T-cell (primary cell): ENCODE measurements at regions of chr2 and their contacts with region 1.

Region 1: GRCh38 chr2:147660680-147661079 is 184.1 kb upstream of the ACVR2A start:
- DNase-seq: no peak
- ATAC-seq: no peak
- H3K4me3 ChIP-seq: no peak overlapping the region
- H3K4me3 Mint-ChIP-seq: no peak overlapping the region
- H3K27ac ChIP-seq: no peak overlapping the region
- H3K27ac Mint-ChIP-seq: peak overlapping the region in 1 of 2 donors; percentile 36
- H3K4me1 ChIP-seq: peaks cover 13 to 16% of the 10 kb centered on the region in 2 experiments
- H3K4me1 Mint-ChIP-seq: peaks cover 39 to 44% (median 42%) of the 10 kb centered on the region in 3 donors
- H3K27me3 ChIP-seq: no peaks in the 10 kb centered on the region
- H3K27me3 Mint-ChIP-seq: no peaks in the 10 kb centered on the region

Region 2: GRCh38 chr2:147442816-147443215 is 217.9 kb before region 1 on chr2:
- CTCF ChIA-PET with region 1: no interaction called
- POLR2A ChIA-PET with region 1: no interaction called
- DNase-seq: no peak
- ATAC-seq: no peak
- H3K4me3 ChIP-seq: no peak overlapping the region
- H3K4me3 Mint-ChIP-seq: no peak overlapping the region
- H3K27ac ChIP-seq: no peak overlapping the region
- H3K27ac Mint-ChIP-seq: no peak overlapping the region
- H3K4me1 ChIP-seq: no peaks in the 10 kb centered on the region
- H3K4me1 Mint-ChIP-seq: no peaks in the 10 kb centered on the region
- H3K27me3 ChIP-seq: no peaks in the 10 kb centered on the region
- H3K27me3 Mint-ChIP-seq: no peaks in the 10 kb centered on the region

Region 3: DNA sequence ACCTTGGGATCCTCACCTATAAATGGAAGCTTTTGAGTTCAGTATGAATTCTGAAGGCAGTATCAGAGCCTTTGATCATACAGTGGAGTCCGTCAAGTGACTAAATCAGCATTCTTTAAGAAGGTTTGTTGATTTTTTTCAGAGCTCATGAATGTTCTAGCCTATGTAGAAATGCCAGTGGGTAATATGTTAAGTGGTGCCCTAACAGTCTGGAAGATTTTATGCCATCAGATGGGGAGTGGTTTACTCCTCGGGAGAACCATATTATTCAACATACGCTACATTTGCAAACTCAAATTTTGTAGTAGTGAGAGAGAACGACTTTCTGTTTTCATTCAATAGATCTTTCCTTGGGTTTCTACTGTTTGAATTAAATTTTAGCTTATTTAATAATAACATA is 40.9 kb before region 1 on chr2:
- CTCF ChIA-PET with region 1: no interaction called
- POLR2A ChIA-PET with region 1: interaction called in 1 of 2 experiments, 10 read pairs
- DNase-seq: no peak
- ATAC-seq: no peak
- H3K4me3 ChIP-seq: no peak overlapping the region
- H3K4me3 Mint-ChIP-seq: no peak overlapping the region
- H3K27ac ChIP-seq: no peak overlapping the region
- H3K27ac Mint-ChIP-seq: no peak overlapping the region
- H3K4me1 ChIP-seq: peaks cover 6 to 14% of the 10 kb centered on the region in 2 experiments
- H3K4me1 Mint-ChIP-seq: peaks cover 25 to 26% (median 26%) of the 10 kb centered on the region in 3 donors
- H3K27me3 ChIP-seq: no peaks in the 10 kb centered on the region
- H3K27me3 Mint-ChIP-seq: no peaks in the 10 kb centered on the region

Region 4: DNA sequence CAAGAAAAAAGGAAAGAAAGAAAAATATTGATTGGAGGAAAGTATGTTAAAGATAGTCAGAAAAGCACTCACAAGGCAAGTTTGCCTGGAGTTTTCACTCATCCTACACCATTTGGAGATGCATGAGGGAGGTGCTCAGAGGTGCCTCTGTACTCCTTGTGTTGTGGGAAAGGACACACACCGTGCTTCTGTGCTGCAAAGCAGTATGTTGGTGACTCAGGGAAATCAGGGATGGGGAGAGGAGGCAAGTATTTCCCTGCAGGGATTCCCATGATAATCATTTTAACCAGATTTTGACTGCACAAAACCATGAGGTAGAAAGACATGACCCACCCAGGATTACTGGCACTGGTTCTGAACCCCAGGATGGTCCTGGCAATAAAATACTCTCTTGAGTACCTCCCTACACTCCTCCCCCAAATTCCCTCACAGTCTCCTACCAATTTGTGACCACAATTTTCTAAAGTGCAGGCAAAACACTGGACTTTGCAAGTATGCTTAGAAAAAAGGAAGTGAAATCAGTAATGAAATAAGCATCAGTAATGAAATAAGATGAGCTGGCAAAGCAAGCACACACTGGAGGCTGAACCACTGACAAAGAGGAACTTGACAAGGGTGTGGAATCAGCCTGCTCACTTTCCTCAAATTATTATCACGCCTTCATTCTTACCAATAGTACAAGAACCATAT is 28.7 kb after region 1 on chr2:
- CTCF ChIA-PET with region 1: no interaction called
- POLR2A ChIA-PET with region 1: interaction called in 1 of 2 experiments, 11 read pairs
- DNase-seq: peak in 1 of 35 experiments; percentile 1
- ATAC-seq: no peak
- H3K4me3 ChIP-seq: no peak overlapping the region
- H3K4me3 Mint-ChIP-seq: no peak overlapping the region
- H3K27ac ChIP-seq: no peak overlapping the region
- H3K27ac Mint-ChIP-seq: no peak overlapping the region
- H3K4me1 ChIP-seq: no peaks in the 10 kb centered on the region
- H3K4me1 Mint-ChIP-seq: no peaks in the 10 kb centered on the region
- H3K27me3 ChIP-seq: no peaks in the 10 kb centered on the region
- H3K27me3 Mint-ChIP-seq: no peaks in the 10 kb centered on the region